T-cell (primary cell): ENCODE measurements at regions of chr5 and their contacts with region 1.

Region 1: GRCh38 chr5:120873083-120873482 is 409.0 kb downstream of the PRR16 start:
- DNase-seq: no peak
- ATAC-seq: no peak
- H3K4me3 ChIP-seq: no peak overlapping the region
- H3K4me3 Mint-ChIP-seq: no peak overlapping the region
- H3K27ac ChIP-seq: no peak overlapping the region
- H3K27ac Mint-ChIP-seq: no peak overlapping the region
- H3K4me1 ChIP-seq: no peaks in the 10 kb centered on the region
- H3K4me1 Mint-ChIP-seq: no peaks in the 10 kb centered on the region
- H3K27me3 ChIP-seq: no peaks in the 10 kb centered on the region
- H3K27me3 Mint-ChIP-seq: no peaks in the 10 kb centered on the region

Region 2: GRCh38 chr5:120942596-120943350 is 69.7 kb after region 1 on chr5:
- CTCF ChIA-PET with region 1: interaction called in 1 of 2 experiments, 11 read pairs
- POLR2A ChIA-PET with region 1: no interaction called
- DNase-seq: no peak
- ATAC-seq: no peak
- H3K4me3 ChIP-seq: no peak overlapping the region
- H3K4me3 Mint-ChIP-seq: no peak overlapping the region
- H3K27ac ChIP-seq: no peak overlapping the region
- H3K27ac Mint-ChIP-seq: no peak overlapping the region
- H3K4me1 ChIP-seq: no peaks in the 10 kb centered on the region
- H3K4me1 Mint-ChIP-seq: no peaks in the 10 kb centered on the region
- H3K27me3 ChIP-seq: no peaks in the 10 kb centered on the region
- H3K27me3 Mint-ChIP-seq: no peaks in the 10 kb centered on the region